AG04450 (cell line): ENCODE measurements at regions of chr3 and their contacts with region 1.

Region 1: GRCh38 chr3:102229062-102229655 is 205.7 kb upstream of the ZPLD1 start:
- DNase-seq: peak; percentile 42
- H3K4me3 ChIP-seq: no peak overlapping the region
- H3K27ac ChIP-seq: no peak overlapping the region
- H3K27me3 ChIP-seq: no peaks in the 10 kb centered on the region
- CTCF ChIP-seq: peak; percentile 98

Region 2: DNA sequence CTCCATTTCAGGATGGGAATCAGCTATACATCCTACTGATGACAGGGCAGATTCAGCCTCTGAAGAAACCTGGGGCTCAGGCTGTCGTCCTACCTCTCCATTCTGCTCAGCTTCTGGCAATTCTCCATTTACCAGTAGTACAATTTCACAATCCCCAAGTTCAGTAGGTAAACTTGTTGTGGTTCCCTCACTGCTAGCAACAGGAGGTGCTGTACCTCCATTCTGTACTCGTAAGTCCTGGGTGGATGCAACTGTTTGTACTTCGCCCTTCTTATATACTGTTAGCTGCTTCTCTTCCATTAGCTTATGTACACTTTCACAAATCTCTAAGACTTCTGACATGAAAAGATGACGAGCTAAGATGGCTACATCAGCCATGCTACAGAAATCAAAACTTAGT is 563.8 kb before region 1 on chr3:
- CTCF ChIA-PET with region 1: no interaction called
- POLR2A ChIA-PET with region 1: no interaction called
- DNase-seq: no peak
- H3K4me3 ChIP-seq: no peak overlapping the region
- H3K27ac ChIP-seq: no peak overlapping the region
- H3K27me3 ChIP-seq: no peaks in the 10 kb centered on the region
- CTCF ChIP-seq: no peak

Region 3: GRCh38 chr3:101803173-101803782 is 425.9 kb before region 1 on chr3:
- CTCF ChIA-PET with region 1: interaction called, 821 read pairs
- POLR2A ChIA-PET with region 1: interaction called, 4 read pairs
- DNase-seq: peak; percentile 54
- H3K4me3 ChIP-seq: no peak overlapping the region
- H3K27ac ChIP-seq: no peak overlapping the region
- H3K27me3 ChIP-seq: no peaks in the 10 kb centered on the region
- CTCF ChIP-seq: peak; percentile 86

Region 4: DNA sequence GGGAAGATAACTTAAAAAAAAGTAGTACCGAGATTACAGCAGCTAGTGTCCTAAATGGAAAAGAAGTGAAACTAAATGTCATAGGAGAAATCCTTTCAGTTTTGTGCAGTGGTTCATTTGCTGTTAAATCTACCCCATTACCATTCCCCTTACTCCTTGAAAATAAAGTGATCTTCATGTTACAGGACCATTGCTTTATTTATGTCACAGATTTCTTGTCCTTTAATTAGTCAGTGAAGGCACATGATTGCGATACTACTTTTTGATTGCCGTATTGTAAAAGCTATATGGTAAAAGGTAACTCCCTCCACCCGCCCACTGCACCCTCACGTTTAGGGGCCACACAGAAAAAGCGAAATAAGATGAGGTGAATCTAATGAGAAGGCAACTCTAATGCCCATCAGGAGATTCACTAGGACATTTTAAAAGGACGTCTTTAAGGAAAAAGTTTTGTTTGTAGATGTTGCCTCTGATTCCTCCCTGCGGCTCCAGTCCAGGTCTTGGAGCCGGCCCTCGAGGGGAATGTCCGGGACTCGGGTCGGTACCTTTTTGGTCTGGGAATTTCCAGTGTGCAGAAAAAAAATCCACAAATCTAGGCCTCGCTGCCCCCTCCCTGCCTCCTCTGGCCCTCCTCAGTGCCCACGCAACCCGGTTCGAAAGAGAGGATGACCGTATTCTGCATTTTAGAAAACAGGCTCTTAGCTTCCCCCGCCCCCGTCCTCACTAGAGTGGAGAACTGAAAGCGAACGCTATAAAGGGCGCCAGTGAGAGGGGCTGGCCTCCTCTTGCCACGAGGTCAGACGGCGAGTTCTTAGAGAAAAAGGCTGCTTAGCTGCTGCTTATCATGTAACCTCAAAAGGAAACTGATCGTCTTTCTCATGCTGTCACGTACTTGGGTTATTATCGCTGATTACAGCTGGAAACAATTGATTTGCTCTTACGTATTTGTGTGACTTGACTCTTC is 401.7 kb before region 1 on chr3:
- CTCF ChIA-PET with region 1: interaction called, 51 read pairs
- POLR2A ChIA-PET with region 1: no interaction called
- DNase-seq: no peak
- H3K4me3 ChIP-seq: peak overlapping the region; percentile 67
- H3K27ac ChIP-seq: peak overlapping the region; percentile 93
- H3K27me3 ChIP-seq: no peaks in the 10 kb centered on the region
- CTCF ChIP-seq: no peak

Region 5: GRCh38 chr3:101849051-101849720 is 380.0 kb before region 1 on chr3 and contains the start of gene NFKBIZ:
- CTCF ChIA-PET with region 1: interaction called, 23 read pairs
- POLR2A ChIA-PET with region 1: interaction called, 26 read pairs
- DNase-seq: peak; percentile 71
- H3K4me3 ChIP-seq: peak within 1 kb of the TSS; percentile 77
- H3K27ac ChIP-seq: peak within 1 kb of the TSS; percentile 92
- H3K27me3 ChIP-seq: no peaks in the 10 kb centered on the region
- CTCF ChIP-seq: no peak
- polyA plus RNA-seq, gene NFKBIZ: 27.3 and 29.6 TPM in 2 replicates

Region 6: DNA sequence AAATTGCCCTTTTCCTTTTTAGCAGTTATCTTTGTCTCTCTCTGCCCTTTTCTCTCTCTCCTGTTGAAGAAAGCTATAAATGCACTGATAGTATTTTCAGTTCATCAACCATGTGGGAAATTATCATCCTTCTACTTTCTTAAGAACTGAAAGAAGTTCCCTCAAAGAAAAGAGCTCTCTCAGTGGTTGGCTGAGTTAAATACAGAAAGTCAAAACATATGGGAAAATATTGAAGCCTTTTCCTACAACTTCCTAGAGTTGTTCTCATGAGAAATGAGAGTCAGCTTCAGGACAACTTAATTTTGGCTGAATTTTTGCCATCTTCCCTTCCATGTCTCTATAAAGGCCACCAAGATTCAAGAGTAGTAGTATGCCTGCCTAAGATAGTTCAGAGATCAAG is 283.2 kb before region 1 on chr3:
- CTCF ChIA-PET with region 1: interaction called, 10 read pairs
- POLR2A ChIA-PET with region 1: no interaction called
- DNase-seq: no peak
- H3K4me3 ChIP-seq: no peak overlapping the region
- H3K27ac ChIP-seq: no peak overlapping the region
- H3K27me3 ChIP-seq: no peaks in the 10 kb centered on the region
- CTCF ChIP-seq: no peak

Region 7: DNA sequence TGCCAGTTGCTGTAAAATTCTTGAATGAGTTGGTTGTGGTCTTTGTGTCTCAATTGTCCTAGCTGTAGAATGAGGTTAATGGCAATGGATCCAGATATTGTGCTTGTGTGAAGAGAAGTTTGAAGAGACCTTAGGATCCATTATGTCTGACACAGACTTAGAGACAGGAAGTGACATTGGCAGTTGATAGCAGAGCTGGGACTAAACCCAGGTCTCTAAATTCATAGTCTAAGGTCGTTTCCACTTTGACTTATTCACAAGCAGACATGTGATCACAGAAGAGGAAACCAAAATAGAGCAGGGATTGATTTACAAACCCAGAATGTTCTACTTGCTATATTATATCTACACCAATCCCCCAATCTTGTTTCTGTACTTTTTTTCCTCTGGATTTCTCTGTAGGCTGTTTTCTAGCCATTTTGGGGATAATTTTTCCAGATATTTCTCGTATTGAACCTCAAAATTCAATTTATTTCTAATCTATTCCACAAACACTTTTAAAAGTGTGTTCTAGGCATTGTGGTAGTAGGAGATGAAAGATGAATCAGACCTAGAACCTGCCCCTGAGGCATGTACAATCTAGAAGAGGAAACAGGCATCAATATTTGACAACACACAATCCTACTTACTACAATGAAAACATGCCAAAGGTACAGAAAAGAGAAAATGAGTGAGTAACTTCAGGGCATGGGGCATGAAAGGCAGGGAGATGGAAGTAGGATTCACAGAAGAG is 256.6 kb before region 1 on chr3:
- CTCF ChIA-PET with region 1: no interaction called
- POLR2A ChIA-PET with region 1: no interaction called
- DNase-seq: no peak
- H3K4me3 ChIP-seq: no peak overlapping the region
- H3K27ac ChIP-seq: no peak overlapping the region
- H3K27me3 ChIP-seq: no peaks in the 10 kb centered on the region
- CTCF ChIP-seq: no peak

Region 8: GRCh38 chr3:102174312-102174712 is 54.8 kb before region 1 on chr3:
- CTCF ChIA-PET with region 1: interaction called, 17 read pairs
- POLR2A ChIA-PET with region 1: no interaction called
- DNase-seq: peak; percentile 42
- H3K4me3 ChIP-seq: no peak overlapping the region
- H3K27ac ChIP-seq: no peak overlapping the region
- H3K27me3 ChIP-seq: no peaks in the 10 kb centered on the region
- CTCF ChIP-seq: no peak

Region 9: GRCh38 chr3:102529452-102529851 is 300.3 kb after region 1 on chr3:
- CTCF ChIA-PET with region 1: interaction called, 366 read pairs
- POLR2A ChIA-PET with region 1: no interaction called
- DNase-seq: peak; percentile 3
- H3K4me3 ChIP-seq: no peak overlapping the region
- H3K27ac ChIP-seq: no peak overlapping the region
- H3K27me3 ChIP-seq: no peaks in the 10 kb centered on the region
- CTCF ChIP-seq: peak; percentile 58